PC-9 (cell line): ENCODE measurements at regions of chr17 and their contacts with region 1.

Region 1: DNA sequence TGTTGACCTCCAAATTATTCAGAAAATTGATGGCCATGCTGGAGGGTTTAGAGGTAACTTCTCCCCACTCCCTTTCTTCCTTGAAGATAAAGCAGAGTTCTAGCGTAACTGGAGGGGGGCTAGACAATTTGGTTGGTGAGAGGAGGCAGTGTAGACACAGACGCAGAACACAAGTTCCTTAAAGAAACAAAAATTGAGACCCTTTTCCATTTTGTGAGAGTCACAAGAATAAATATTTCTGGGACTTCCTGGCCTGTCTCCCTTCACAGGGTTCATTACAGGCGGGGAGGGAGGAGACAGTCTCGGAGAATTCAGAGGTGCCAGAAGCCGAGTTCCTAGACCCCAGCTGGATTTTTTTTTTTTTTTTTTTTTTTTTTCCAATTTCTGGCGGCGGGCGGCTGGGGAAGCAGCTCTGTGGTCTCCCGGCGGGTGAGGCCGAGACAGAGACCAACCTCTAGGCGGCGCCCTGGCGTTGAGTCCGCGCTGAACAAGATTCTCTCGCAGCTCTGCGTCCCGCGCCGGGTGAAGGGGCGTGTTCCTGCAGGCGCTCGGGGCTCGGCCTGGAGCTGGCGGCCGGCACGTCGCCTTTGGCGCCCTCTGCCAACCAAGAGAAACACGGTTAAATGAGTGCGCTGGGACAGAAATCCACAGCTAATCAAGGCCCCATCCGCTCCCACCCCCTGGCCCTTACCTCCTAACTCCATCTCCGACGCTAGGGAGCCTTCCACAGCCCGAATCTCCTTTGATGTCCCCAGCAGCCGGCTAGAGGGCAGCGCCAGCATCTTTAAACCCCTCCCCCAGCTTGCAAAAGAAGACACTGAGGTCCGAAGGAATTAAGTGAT is 10.2 kb upstream of the HOXB9 start:
- DNase-seq: peak; percentile 59 to 87
- H3K4me3 ChIP-seq: no peak overlapping the region
- H3K27ac ChIP-seq: no peak overlapping the region
- H3K4me1 ChIP-seq: no peaks in the 10 kb centered on the region
- H3K27me3 ChIP-seq: peaks cover 74% of the 10 kb centered on the region
- CTCF ChIP-seq: peak; percentile 65

Region 2: DNA sequence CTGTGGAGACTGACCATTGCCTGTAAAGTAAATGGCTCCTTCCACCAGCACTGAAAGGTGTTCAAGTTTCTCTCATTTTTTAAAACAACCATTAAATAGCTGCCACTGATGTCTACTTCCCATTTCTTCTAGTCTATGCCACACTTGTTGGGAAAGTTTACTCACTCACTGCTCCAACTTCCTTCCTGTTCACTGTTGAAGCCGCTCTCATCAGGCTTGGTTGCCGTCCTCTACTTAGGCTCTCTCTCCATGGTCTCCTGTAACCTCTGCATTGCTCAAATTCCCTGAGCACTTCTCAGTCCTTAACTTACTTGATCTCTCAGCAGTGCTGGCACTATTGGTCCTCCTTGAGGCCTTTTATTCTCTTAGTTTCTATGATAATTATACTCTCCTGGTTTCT is 496.5 kb before region 1 on chr17:
- CTCF ChIA-PET with region 1: interaction called, 13 read pairs
- POLR2A ChIA-PET with region 1: no interaction called
- intact Hi-C with region 1: no loop called
- DNase-seq: no peak
- H3K4me3 ChIP-seq: no peak overlapping the region
- H3K27ac ChIP-seq: no peak overlapping the region
- H3K4me1 ChIP-seq: no peaks in the 10 kb centered on the region
- H3K27me3 ChIP-seq: 0 out of 2 replicates have a peak, but pooled peaks cover 12% of the 10 kb centered on the region
- CTCF ChIP-seq: no peak

Region 3: DNA sequence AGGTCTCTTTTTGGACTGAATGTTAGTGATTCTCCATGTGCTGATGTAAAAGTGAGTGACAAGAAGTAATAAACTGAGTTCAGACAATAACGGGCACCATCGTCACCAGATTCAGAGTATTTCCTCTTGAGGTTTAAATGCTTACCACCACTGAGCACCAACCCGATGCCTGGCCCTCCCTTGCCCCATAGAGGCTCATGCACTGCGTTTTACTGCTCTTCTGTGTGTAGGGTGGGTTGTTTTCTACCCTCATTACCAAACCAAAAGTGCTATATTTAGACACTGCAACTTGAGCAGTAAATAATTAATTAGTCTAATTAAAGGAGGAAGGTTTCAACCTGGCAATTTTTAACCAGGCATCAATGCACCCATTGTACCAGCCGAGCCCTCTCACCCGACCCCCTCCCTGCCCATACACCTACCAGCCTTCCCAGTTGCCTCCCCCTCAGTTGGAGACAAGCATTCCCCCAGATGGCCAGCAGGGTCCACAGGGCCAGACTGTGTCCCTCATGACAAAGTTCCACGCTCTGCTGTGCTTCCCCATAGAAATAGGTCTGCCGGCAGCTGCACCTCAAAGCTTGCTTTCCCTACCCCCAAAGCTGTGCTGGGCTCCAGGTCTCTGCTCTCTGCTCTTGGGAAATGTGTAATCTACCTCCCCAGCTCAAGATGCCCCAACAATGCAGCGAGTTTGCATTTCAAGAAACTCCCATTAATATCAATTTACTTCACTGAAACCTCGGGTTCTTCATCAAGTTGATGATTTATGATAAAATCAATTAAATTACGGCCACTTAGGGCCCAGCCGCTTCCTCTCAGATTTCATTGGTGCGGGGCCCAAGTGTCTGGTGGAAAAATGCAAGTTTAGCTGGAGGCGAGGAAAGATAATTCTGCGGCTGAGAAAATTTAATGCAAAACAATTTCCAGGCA is 74.3 kb before region 1 on chr17:
- CTCF ChIA-PET with region 1: no interaction called
- POLR2A ChIA-PET with region 1: no interaction called
- intact Hi-C with region 1: no loop called
- DNase-seq: no peak
- H3K4me3 ChIP-seq: no peak overlapping the region
- H3K27ac ChIP-seq: no peak overlapping the region
- H3K4me1 ChIP-seq: no peaks in the 10 kb centered on the region
- H3K27me3 ChIP-seq: no peaks in the 10 kb centered on the region
- CTCF ChIP-seq: no peak

Region 4: GRCh38 chr17:48728232-48729231 is 92.1 kb after region 1 on chr17 and contains the start of gene HOXB13:
- CTCF ChIA-PET with region 1: no interaction called
- POLR2A ChIA-PET with region 1: no interaction called
- intact Hi-C with region 1: no loop called
- DNase-seq: peak in 1 of 2 experiments; percentile 16
- H3K4me3 ChIP-seq: no peak within 1 kb of the TSS
- H3K27ac ChIP-seq: no peak within 1 kb of the TSS
- H3K4me1 ChIP-seq: no peaks in the 10 kb centered on the region
- H3K27me3 ChIP-seq: peaks cover 93% of the 10 kb centered on the region
- CTCF ChIP-seq: no peak
- total RNA-seq, gene HOXB13: 0.15 TPM in 1 of 2 replicates, not detected in the other

Region 5: DNA sequence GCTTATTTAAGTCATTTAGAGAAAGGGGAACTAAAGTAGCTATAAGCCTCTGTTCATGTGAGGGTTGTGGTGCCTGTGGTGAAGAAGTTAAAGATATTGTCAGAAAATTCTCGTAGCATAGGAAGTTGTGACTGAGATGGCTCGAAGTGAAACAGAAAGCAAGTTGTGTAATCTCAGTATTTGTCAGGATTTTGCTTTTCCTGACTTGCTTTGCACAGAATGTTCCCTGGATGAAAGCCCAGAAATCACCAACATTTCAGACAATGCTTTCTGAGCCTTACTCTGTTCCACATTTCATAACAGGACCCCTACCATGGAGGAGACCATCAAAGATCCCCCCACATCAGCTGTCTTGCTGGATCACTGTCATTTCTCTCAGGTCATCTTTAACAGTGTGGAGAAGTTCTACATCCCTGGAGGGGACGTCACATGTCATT is 205.0 kb after region 1 on chr17:
- CTCF ChIA-PET with region 1: interaction called, 11 read pairs
- POLR2A ChIA-PET with region 1: no interaction called
- intact Hi-C with region 1: no loop called
- DNase-seq: no peak
- H3K4me3 ChIP-seq: no peak overlapping the region
- H3K27ac ChIP-seq: no peak overlapping the region
- H3K4me1 ChIP-seq: peaks cover 1% of the 10 kb centered on the region
- H3K27me3 ChIP-seq: no peaks in the 10 kb centered on the region
- CTCF ChIP-seq: no peak